T-cell (primary cell): ENCODE measurements at regions of chr22 and their contacts with region 1.

Region 1: DNA sequence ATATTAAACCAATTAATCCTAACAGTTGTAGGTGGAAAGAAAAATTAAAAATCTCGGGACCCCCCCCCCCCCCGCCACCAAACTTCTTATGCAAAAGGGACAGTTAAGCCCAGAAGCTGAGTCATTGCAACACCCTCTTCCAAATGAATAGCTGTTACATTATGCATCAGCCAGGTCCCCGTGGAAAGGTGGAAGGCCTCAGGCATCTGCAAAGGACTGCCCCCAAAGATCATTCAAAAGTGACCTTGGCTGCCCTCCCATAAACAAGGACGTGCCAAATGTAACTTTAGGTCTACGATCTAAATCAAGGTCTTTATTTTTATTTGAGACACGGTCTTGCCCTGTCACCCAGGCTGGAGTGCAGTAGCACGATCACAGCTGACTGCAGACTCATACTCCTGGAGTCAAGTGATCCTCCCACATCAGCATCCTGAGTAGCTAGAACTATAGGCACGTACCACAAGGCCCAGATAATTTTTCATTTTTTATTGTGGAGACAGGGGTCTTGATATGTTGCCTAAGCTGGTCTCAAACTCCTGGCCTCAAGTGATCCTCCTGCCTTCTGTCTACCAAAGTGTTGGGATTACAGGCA is 22.8 kb downstream of the SYN3 start:
- DNase-seq: no peak
- ATAC-seq: no peak
- H3K4me3 ChIP-seq: no peak overlapping the region
- H3K4me3 Mint-ChIP-seq: no peak overlapping the region
- H3K27ac ChIP-seq: no peak overlapping the region
- H3K27ac Mint-ChIP-seq: no peak overlapping the region
- H3K4me1 ChIP-seq: no peaks in the 10 kb centered on the region
- H3K4me1 Mint-ChIP-seq: no peaks in the 10 kb centered on the region
- H3K27me3 ChIP-seq: peaks cover 0 to 8% of the 10 kb centered on the region in 2 experiments
- H3K27me3 Mint-ChIP-seq: peaks cover 9 to 13% of the 10 kb centered on the region in 2 donors

Region 2: GRCh38 chr22:32069579-32070372 is 965.6 kb before region 1 on chr22:
- CTCF ChIA-PET with region 1: no interaction called
- POLR2A ChIA-PET with region 1: interaction called in 1 of 2 experiments, 12 read pairs
- DNase-seq: no peak
- ATAC-seq: no peak
- H3K4me3 ChIP-seq: no peak overlapping the region
- H3K4me3 Mint-ChIP-seq: no peak overlapping the region
- H3K27ac ChIP-seq: no peak overlapping the region
- H3K27ac Mint-ChIP-seq: no peak overlapping the region
- H3K4me1 ChIP-seq: no peaks in the 10 kb centered on the region
- H3K4me1 Mint-ChIP-seq: no peaks in the 10 kb centered on the region
- H3K27me3 ChIP-seq: peaks cover 2 to 27% of the 10 kb centered on the region in 2 experiments
- H3K27me3 Mint-ChIP-seq: peaks cover 18 to 20% of the 10 kb centered on the region in 2 donors

Region 3: DNA sequence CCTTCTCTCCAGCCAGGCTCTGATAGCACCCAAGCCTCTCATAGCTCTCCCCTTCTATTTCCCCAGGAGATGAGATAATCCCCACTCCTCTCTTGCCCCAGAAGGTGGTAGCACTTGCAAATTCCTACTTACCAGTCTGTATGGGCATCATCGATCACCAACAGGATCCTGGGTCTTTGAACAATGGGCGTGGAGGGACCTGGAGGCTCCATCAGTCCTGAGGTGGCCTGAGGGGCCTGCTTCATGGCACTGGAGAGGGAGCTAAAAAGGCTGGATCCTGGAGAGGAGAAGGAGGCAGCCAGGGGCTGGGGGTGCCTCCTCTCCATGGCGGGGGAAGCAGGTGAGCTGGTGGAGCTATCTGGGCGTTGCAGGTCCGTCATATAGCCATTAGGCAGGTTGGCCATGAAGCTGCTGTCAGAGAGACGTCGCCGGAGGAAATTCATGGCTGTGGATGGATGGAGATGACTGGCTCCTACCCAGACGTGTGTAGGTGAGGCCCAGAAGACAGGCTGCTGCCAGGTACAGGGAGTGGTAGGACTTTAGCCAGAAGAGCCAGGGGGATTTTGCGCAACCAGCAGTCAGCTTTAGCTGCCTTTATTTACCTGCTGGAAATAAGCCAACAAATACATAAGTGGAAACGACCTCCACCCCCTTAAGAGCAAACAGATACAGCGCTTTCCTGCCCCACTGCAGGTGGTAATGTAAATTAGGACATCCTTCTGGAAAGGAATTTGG is 29.0 kb before region 1 on chr22:
- CTCF ChIA-PET with region 1: no interaction called
- POLR2A ChIA-PET with region 1: interaction called in 1 of 2 experiments, 11 read pairs
- DNase-seq: no peak
- ATAC-seq: no peak
- H3K4me3 ChIP-seq: no peak overlapping the region
- H3K4me3 Mint-ChIP-seq: no peak overlapping the region
- H3K27ac ChIP-seq: no peak overlapping the region
- H3K27ac Mint-ChIP-seq: no peak overlapping the region
- H3K4me1 ChIP-seq: no peaks in the 10 kb centered on the region
- H3K4me1 Mint-ChIP-seq: no peaks in the 10 kb centered on the region
- H3K27me3 ChIP-seq: peaks cover 0 to 9% of the 10 kb centered on the region in 2 experiments
- H3K27me3 Mint-ChIP-seq: peaks cover 0 to 13% of the 10 kb centered on the region in 2 donors